ENCODE measurements at regions of chr2 and their contacts with region 1.

Region 1: GRCh38 chr2:225668606-225669266 is 269.2 kb downstream of the NYAP2 start:
- DNase-seq: peak; percentile 54
- H3K4me3 ChIP-seq: no peak overlapping the region
- H3K27ac ChIP-seq: no peak overlapping the region
- H3K4me1 ChIP-seq: no peaks in the 10 kb centered on the region
- H3K27me3 ChIP-seq: no peaks in the 10 kb centered on the region
- CTCF ChIP-seq: peak; percentile 45 to 67
- POLR2A ChIP-seq: no peak

Region 2: DNA sequence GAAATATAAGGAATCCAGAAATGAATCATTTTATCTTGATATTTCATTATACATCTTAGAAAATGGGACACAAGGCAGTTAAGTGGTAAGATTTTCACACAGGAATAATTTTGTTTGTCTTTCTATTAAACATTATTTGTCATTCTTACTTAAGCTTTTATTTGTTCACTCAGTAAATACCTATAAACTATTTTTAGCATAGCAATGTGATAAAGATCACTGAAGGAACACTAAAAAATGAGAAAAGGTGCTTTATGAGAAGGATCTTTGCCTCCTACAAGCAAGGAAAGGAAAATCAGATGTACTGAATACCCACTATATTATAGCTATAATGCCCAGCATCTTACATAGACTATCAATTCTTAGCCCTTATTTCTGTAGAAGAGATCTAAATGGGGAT is 445.4 kb before region 1 on chr2:
- CTCF ChIA-PET with region 1: no interaction called
- POLR2A ChIA-PET with region 1: no interaction called
- dilution Hi-C with region 1: no loop called
- intact Hi-C with region 1: no loop called
- DNase-seq: no peak
- H3K4me3 ChIP-seq: no peak overlapping the region
- H3K27ac ChIP-seq: no peak overlapping the region
- H3K4me1 ChIP-seq: no peaks in the 10 kb centered on the region
- H3K27me3 ChIP-seq: no peaks in the 10 kb centered on the region
- CTCF ChIP-seq: no peak
- POLR2A ChIP-seq: no peak

Region 3: GRCh38 chr2:225889446-225889850 is 220.7 kb after region 1 on chr2:
- CTCF ChIA-PET with region 1: interaction called, 4 read pairs
- POLR2A ChIA-PET with region 1: no interaction called
- dilution Hi-C with region 1: no loop called
- intact Hi-C with region 1: loop called (anchors 1 kb)
- DNase-seq: peak; percentile 25
- H3K4me3 ChIP-seq: no peak overlapping the region
- H3K27ac ChIP-seq: no peak overlapping the region
- H3K4me1 ChIP-seq: no peaks in the 10 kb centered on the region
- H3K27me3 ChIP-seq: no peaks in the 10 kb centered on the region
- CTCF ChIP-seq: peak; percentile 21 to 40
- POLR2A ChIP-seq: no peak

Region 4: DNA sequence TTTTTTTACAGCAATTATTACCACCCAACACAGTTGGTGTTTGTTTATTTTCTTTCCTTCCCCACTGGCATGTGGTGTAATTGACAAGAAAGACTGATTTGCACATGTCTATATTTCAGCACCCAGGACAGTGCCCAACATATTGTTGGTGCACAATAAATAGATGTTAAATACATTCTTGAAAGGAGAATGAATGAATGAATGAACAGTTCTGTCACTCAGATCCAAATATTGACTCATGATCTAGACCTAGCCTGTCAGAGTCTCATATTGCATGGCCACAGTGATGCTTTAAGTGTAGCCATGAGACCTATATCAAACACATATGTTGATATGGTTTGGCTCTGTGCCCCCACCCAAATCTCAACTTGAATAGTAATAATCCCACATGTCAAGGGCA is 269.0 kb after region 1 on chr2:
- CTCF ChIA-PET with region 1: no interaction called
- POLR2A ChIA-PET with region 1: no interaction called
- dilution Hi-C with region 1: no loop called
- intact Hi-C with region 1: no loop called
- DNase-seq: no peak
- H3K4me3 ChIP-seq: no peak overlapping the region
- H3K27ac ChIP-seq: no peak overlapping the region
- H3K4me1 ChIP-seq: no peaks in the 10 kb centered on the region
- H3K27me3 ChIP-seq: no peaks in the 10 kb centered on the region
- CTCF ChIP-seq: no peak
- POLR2A ChIP-seq: no peak

Region 5: DNA sequence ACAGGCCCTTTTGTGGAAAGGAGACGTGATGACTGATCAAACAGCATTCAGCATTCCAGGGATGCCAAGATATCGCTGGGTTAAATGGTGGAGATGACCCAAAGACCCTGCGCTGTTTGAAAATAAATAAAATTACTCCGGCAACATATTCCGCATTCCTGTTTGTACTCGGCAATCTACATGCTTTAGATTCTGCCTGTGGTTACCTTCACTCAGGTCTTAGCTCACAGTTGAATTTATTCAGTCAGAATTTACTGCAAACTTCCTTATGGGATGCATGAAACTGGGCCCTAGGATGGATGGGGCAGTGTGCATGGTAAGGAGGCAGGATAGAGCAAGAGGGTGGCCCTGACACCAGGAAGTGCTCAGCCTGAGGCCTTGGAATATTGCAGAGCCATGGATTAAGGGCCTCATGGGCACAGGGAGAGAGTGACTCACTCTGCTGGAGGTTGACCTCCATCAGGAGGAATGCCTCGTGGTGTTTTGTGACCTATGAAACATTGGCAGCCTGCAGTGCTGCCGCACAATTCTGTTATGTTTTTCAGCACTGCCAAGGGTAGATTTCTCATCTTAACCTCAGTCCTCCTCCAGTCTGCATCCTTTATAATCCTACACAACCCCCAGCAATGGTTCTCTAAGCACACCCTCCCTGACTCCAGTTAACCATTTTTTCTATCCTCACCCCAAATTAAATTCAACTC is 809.5 kb after region 1 on chr2:
- CTCF ChIA-PET with region 1: interaction called, 5 read pairs
- POLR2A ChIA-PET with region 1: no interaction called
- dilution Hi-C with region 1: no loop called
- intact Hi-C with region 1: loop called (anchors 5 kb)
- DNase-seq: peak; percentile 72
- H3K4me3 ChIP-seq: no peak overlapping the region
- H3K27ac ChIP-seq: peak overlapping the region; percentile 71
- H3K4me1 ChIP-seq: peaks cover 13% of the 10 kb centered on the region
- H3K27me3 ChIP-seq: no peaks in the 10 kb centered on the region
- CTCF ChIP-seq: no peak
- POLR2A ChIP-seq: no peak

Region 6: GRCh38 chr2:227106845-227107759 is 1438.4 kb after region 1 on chr2:
- CTCF ChIA-PET with region 1: interaction called, 28 read pairs
- POLR2A ChIA-PET with region 1: no interaction called
- dilution Hi-C with region 1: no loop called
- intact Hi-C with region 1: loop called (anchors 1 kb)
- DNase-seq: peak; percentile 32
- H3K4me3 ChIP-seq: no peak overlapping the region
- H3K27ac ChIP-seq: no peak overlapping the region
- H3K4me1 ChIP-seq: no peaks in the 10 kb centered on the region
- H3K27me3 ChIP-seq: no peaks in the 10 kb centered on the region
- CTCF ChIP-seq: peak; percentile 26 to 34
- POLR2A ChIP-seq: no peak